ENCODE measurements at regions of chr2 and their contacts with region 1.

Region 1: DNA sequence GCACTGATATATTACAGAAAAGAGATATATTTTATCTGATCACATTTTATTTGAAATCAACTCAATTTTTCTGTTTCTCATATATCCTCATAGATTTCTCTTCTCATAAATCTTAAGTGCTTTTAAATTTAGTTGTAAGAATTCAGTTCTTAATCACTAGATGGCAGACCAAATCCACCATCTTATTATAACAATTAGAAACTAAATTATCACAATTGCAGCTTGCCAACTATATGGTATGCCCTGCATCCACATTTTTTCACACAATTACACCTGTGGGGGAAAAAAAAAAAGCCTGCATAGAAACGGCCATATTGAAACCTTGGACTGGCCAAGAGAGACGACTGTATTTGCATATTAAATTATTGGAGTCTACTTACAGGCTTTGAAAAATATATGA is 64.4 kb downstream of the COL5A2 start:
- DNase-seq: no peak
- H3K4me3 ChIP-seq: no peak overlapping the region
- H3K27ac ChIP-seq: no peak overlapping the region
- H3K4me1 ChIP-seq: no peaks in the 10 kb centered on the region
- H3K27me3 ChIP-seq: no peaks in the 10 kb centered on the region
- CTCF ChIP-seq: peak; percentile 46; the same call in 1 of the 2 replicates

Region 2: GRCh38 chr2:189287982-189288521 is 172.9 kb after region 1 on chr2:
- CTCF ChIA-PET with region 1: no interaction called
- POLR2A ChIA-PET with region 1: no interaction called
- intact Hi-C with region 1: loop called (anchors 5 kb)
- DNase-seq: no peak
- H3K4me3 ChIP-seq: no peak overlapping the region
- H3K27ac ChIP-seq: no peak overlapping the region
- H3K4me1 ChIP-seq: no peaks in the 10 kb centered on the region
- H3K27me3 ChIP-seq: no peaks in the 10 kb centered on the region
- CTCF ChIP-seq: peak; percentile 58; the same call in 1 of the 2 replicates

Region 3: DNA sequence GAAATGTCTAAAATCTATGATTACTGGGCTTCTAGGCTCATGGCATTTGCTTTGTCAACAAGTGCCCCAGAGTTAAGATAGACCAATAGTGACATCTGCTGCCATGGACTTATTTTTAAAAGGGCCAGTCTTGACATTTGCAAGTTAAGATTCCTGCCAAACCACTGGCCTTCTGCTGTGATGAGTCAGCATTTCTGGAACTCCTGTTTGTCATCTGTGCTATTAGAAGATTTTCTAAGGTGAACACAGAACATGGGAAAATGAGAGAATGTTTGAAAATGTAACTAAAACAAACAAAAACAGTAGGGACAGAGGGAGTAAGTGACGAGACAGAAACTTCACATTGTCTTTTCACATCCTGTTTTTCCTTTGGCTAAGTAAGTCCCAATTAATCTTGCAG is 232.4 kb after region 1 on chr2:
- CTCF ChIA-PET with region 1: no interaction called
- POLR2A ChIA-PET with region 1: no interaction called
- intact Hi-C with region 1: loop called (anchors 5 kb)
- DNase-seq: peak; percentile 18 to 41
- H3K4me3 ChIP-seq: no peak overlapping the region
- H3K27ac ChIP-seq: no peak overlapping the region
- H3K4me1 ChIP-seq: no peaks in the 10 kb centered on the region
- H3K27me3 ChIP-seq: no peaks in the 10 kb centered on the region
- CTCF ChIP-seq: no peak

Measured in PC-9 (cell line).